Posterior cingulate gyrus (tissue), 11 donors: ENCODE measurements at regions of chr3 and their contacts with region 1.

Region 1: DNA sequence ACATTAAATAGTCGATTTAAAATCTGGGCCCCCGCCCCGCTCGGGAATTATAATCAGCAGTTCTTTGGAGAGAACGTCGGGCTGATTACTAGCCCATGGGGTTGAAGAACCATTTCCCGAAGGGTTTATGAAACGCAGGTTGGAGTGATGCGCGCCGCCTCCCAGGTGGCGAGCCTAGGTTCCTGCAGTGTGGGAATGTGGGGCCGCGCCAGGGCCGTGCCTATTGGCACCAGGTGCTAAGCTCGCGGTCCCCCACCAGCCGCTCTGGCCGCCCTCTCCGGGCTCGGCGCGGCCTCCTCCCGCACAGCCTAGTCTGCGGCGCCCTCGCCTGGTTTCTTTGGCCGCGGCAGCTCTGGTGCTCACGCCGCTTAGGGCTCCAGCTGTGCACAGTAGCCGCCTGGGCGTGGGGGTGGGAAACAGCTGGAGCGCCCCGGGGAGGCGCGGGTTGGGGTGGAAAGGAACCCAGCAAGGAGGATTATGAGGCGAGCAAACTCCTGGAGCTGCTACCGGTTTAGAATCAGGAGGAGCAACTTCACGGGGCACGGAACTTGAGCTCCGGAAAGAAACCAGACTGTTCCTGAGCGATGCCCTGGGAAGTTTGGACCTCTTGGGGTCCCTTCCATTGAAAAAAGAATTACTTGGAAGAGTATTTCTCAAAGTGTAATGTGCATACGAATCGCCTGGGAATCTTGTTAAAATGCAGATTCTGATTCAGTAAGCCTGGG is 5.6 kb upstream of the MECOM start:
- DNase-seq: peak in 8 of 10 donors; percentile 32 to 94 (median 63)

Region 2: GRCh38 chr3:168865022-168865551 is 804.0 kb before region 1 on chr3:
- intact Hi-C with region 1: loop called (anchors 10 kb)
- DNase-seq: no peak

Region 3: DNA sequence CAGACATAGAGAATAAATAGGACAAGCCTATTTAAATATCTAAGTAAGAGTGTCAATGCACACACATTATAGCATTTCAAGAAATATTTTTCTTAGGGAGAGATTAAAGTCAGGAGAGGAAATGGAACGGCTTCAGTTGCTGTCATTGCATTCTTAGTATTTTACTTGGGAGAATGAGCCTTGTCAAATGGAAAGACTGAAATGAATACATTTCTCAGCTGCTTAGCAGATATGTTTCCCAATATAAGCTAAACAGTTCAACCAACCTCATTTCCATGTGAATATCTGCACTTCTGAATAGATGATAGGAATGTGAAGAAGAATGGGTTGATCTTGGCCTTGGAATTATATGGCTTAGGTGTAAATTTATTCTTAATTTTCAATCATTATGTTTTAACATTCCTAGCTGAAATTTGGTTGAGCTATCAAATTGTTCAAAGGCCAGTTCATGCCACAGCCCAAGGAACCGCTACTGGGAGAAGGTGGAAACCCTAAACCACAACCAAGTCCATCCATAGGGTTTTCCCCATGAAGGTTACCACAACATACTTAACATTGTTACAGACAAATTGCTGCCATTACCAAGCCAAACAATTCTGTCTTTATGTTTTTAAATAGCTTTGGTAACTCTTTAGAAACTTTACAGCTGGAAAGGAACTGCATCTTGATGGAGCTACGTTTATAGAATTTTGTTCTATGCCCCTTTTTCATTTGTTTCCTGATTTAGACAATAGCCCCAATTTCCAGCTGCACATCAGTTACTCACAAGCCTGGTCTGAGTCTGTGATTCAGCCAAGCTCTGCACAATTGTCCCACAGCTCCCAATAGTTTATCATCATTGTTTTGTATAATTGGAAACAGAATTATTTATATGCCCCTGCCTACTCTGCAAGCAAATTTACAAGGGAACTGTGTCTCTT is 465.2 kb before region 1 on chr3:
- intact Hi-C with region 1: no loop called
- DNase-seq: no peak

Region 4: GRCh38 chr3:169348929-169349613 is 320.0 kb before region 1 on chr3:
- intact Hi-C with region 1: loop called (anchors 10 kb)
- DNase-seq: no peak

Region 5: GRCh38 chr3:169454823-169455222 is 214.3 kb before region 1 on chr3:
- intact Hi-C with region 1: no loop called
- DNase-seq: no peak

Region 6: DNA sequence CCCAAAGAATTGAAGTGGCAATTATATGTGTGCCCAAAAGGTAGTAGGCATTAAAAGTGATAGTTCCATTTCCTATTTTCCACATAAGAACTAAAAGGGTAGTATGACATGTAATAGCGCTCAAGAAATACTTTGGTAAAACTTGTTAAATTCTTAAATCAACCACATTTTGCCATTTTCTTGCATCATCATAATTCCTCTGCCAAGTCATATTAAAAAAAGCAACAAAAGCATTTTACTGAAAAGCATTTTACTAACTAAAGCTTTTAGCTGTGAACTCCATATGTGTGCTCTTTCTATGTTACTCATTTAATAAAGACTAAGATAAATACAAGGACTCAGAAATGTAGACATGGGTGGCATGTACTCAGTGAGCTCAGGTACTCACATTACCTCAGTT is 438.8 kb after region 1 on chr3:
- intact Hi-C with region 1: no loop called
- DNase-seq: no peak